HEK293 (cell line): ENCODE measurements at regions of chr17 and their contacts with region 1.

Region 1: DNA sequence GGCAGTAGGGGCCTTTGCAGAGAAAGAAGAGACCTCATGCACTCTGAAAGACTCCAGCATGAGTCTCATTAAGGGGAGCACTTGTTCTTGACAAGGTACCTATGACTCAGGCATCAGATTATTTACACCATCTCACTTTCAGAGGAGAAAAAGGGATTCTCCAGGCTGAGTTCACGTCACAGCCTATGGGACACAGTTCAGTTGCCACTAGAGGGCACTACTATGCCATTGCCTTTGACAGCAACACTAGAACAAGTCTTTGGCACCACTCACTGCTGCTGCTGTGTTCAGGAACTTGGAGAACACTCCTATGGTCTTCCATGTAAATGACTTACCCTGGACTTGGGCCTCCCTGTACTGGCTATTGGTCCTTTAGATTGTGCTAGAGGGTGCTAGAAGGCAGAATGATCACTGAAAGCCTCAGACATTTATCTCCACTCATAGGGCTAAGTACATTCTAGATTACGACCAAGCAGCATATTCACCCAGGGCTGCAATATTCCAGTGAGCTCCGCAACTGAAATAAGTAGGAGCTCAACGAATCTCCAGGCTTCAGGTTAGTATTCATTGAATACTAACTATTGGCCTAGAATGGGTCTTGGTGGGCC is 225.1 kb upstream of the CA10 start:
- H3K4me3 ChIP-seq: no peak overlapping the region
- H3K27ac ChIP-seq: no peak overlapping the region
- H3K4me1 ChIP-seq: no peaks in the 10 kb centered on the region
- CTCF ChIP-seq: no peak; the same call in 1 of the 2 replicates

Region 2: DNA sequence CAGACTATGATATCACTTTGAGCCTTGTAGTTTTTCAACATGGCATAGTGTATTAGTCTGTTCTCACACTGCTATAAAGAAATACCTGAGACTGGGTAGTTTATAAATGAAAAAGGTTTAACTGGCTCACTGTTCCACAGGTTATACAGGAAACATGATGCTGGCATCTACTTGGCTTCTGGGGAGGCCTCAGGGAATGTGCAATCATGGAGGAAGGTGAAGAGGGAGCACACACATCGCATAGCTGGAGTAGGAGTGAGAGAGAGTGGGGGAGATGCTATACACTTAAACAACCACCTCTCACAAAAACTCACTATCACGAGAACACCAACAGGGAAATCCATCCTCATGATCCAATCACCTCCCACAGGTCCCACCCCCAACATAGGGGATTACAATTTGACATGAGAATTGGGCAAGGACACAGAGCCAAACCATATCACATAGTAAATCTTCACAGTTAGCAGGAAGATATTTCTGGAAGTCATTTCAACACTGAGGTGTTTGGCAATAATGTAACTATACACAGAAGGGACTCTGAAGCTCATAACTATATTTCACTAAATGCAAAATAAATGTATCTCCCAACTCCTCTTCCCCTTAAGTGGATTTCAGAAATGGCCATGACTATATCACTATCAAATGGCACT is 10.2 kb before region 1 on chr17:
- CTCF ChIA-PET with region 1: interaction called, 10 read pairs
- POLR2A ChIA-PET with region 1: no interaction called
- H3K4me3 ChIP-seq: no peak overlapping the region
- H3K27ac ChIP-seq: no peak overlapping the region
- H3K4me1 ChIP-seq: no peaks in the 10 kb centered on the region
- CTCF ChIP-seq: no peak

Region 3: DNA sequence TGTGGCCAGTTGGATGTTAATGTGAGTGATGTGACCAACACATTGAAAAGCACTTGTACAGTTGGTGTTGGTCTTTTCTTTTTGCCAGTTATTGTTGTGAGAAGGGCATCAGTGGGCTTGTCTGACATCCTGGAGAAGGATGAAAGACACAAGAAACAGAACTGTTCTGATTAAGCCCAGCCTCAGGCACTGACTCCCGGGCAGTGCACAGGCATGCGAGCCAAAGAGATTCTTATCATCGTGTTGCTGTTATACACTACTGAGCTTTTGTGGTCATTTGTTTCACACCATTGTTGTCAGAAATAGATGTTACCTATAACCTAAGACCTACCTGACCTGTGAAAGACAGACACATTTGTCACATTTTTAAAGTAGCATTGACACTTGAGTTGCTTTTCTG is 11.7 kb after region 1 on chr17:
- CTCF ChIA-PET with region 1: interaction called, 23 read pairs
- POLR2A ChIA-PET with region 1: no interaction called
- H3K4me3 ChIP-seq: no peak overlapping the region
- H3K27ac ChIP-seq: no peak overlapping the region
- H3K4me1 ChIP-seq: no peaks in the 10 kb centered on the region
- CTCF ChIP-seq: no peak